Thyroid gland (tissue), 4 donors: ENCODE measurements at regions of chr4 and their contacts with region 1.

Region 1: GRCh38 chr4:173333712-173334084 is 460 bp downstream of the HMGB2 start:
- DNase-seq: peak; percentile 66 to 70
- H3K4me3 ChIP-seq: peak overlapping the region; percentile 65 to 92 (median 73)
- H3K27ac ChIP-seq: peak overlapping the region; percentile 91 to 100 (median 96)
- H3K4me1 ChIP-seq: peaks cover 4 to 18% of the 10 kb centered on the region in 2 donors
- H3K27me3 ChIP-seq: no peaks in the 10 kb centered on the region
- CTCF ChIP-seq: no peak
- POLR2A ChIP-seq: no peak

Region 2: GRCh38 chr4:173370477-173371291 is 37.0 kb after region 1 on chr4 and contains the start of gene SAP30:
- intact Hi-C with region 1: loop called (anchors 2 kb)
- DNase-seq: peak; percentile 99
- H3K4me3 ChIP-seq: peak within 1 kb of the TSS; percentile 68 to 95 (median 80)
- H3K27ac ChIP-seq: peak within 1 kb of the TSS; percentile 93 to 98 (median 97)
- H3K4me1 ChIP-seq: peaks cover 6 to 15% of the 10 kb centered on the region in 2 donors
- H3K27me3 ChIP-seq: no peaks in the 10 kb centered on the region
- CTCF ChIP-seq: no peak
- POLR2A ChIP-seq: peak; percentile 91 to 99
- total RNA-seq, gene SAP30: 22.2 to 47.9 (median 29.8) TPM